ENCODE measurements at regions of chr14 and their contacts with region 1.

Region 1: GRCh38 chr14:75675265-75675960 is 14.4 kb downstream of the TTLL5 start:
- DNase-seq: peak; percentile 23

Region 2: DNA sequence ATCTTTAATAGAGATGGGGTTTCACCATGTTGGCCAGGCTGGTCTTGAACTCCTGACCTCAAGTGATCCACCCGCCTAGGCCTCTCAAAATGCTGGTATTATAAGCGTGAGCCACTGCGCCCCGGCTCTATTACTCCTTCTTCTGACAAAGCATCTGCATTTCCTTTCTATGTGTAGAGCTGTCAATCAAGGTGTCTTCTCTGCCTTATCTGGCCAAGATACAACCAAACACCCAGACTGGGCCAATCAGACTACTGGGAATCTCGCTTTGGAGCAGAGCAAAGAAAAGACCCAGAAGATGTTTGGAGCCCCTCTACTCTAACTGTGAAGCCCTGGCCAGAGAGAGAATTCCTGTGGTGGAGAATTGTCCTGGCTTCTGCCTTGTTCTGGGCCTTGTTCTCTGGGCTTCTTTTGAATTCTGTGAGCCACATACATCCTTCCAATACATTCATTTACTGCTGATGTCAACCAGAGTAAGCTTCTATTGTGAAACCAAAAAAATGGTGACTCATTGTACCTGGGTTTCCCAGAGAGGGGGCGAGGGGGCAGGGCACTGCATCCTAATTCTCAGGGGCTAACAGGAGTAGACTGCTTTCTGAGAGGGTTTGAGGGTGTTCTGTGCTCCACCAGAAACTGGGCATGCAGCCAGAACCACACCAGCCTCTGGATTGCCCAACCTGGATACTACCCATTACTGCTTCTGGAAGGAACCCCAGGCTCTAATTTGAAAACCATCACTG is 115.8 kb before region 1 on chr14:
- CTCF ChIA-PET with region 1: no interaction called
- POLR2A ChIA-PET with region 1: no interaction called
- DNase-seq: no peak

Region 3: GRCh38 chr14:75660630-75661494 is 14.6 kb before region 1 on chr14 and contains the starts of genes ERG28 and TTLL5:
- CTCF ChIA-PET with region 1: no interaction called
- POLR2A ChIA-PET with region 1: interaction called, 19 read pairs
- DNase-seq: peak; percentile 96

Region 4: GRCh38 chr14:75738192-75738591 is 62.8 kb after region 1 on chr14:
- CTCF ChIA-PET with region 1: no interaction called
- POLR2A ChIA-PET with region 1: no interaction called
- DNase-seq: no peak

Measured in HEK293T (cell line).